Activated CD8-positive, alpha-beta memory T cell treated with anti-CD3 and anti-CD28 coated beads, Interleukin-2, amount 10 ng/mL, durations not matched to agents 7 days and 5 days (primary cell): ENCODE measurements at regions of chr1 and their contacts with region 1.

Region 1: DNA sequence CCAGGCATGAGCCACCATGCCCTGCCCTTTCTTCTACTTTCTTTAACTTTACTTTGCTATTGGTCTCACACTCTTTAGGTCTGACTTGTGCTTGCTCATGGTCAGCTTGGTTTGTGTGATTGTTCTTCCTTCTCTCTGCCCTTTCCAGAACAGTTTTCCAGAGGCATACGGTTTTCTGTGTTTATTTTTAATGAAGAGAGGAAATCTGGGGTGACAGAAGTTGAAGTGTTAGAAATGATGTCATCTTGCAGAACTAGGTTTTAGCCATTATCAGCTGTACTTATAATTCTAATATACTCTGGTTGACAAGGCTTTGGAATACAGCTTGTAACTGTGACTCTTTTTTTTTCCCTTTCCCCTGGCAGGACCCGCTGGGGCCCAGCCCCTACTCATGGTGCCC is 14.4 kb downstream of the AGO3 start:
- DNase-seq: no peak
- ATAC-seq: no peak
- H3K4me3 Mint-ChIP-seq: no peak overlapping the region
- H3K27ac Mint-ChIP-seq: peak overlapping the region; percentile 41
- H3K4me1 Mint-ChIP-seq: peaks cover 50% of the 10 kb centered on the region
- H3K27me3 Mint-ChIP-seq: no peaks in the 10 kb centered on the region

Region 2: GRCh38 chr1:35930593-35931445 is 14.5 kb before region 1 on chr1 and contains the start of gene AGO3:
- CTCF ChIA-PET with region 1: interaction called, 39 read pairs
- DNase-seq: peak; percentile 91
- ATAC-seq: peak; percentile 87
- H3K4me3 Mint-ChIP-seq: peak within 1 kb of the TSS; percentile 95
- H3K27ac Mint-ChIP-seq: peak within 1 kb of the TSS; percentile 95
- H3K4me1 Mint-ChIP-seq: peaks cover 31% of the 10 kb centered on the region
- H3K27me3 Mint-ChIP-seq: no peaks in the 10 kb centered on the region
- total RNA-seq, gene AGO3: 26.2 to 33.1 TPM

Region 3: GRCh38 chr1:35962952-35963351 is 17.6 kb after region 1 on chr1:
- CTCF ChIA-PET with region 1: no interaction called
- DNase-seq: no peak
- ATAC-seq: no peak
- H3K4me3 Mint-ChIP-seq: no peak overlapping the region
- H3K27ac Mint-ChIP-seq: no peak overlapping the region
- H3K4me1 Mint-ChIP-seq: no peaks in the 10 kb centered on the region
- H3K27me3 Mint-ChIP-seq: no peaks in the 10 kb centered on the region

Region 4: DNA sequence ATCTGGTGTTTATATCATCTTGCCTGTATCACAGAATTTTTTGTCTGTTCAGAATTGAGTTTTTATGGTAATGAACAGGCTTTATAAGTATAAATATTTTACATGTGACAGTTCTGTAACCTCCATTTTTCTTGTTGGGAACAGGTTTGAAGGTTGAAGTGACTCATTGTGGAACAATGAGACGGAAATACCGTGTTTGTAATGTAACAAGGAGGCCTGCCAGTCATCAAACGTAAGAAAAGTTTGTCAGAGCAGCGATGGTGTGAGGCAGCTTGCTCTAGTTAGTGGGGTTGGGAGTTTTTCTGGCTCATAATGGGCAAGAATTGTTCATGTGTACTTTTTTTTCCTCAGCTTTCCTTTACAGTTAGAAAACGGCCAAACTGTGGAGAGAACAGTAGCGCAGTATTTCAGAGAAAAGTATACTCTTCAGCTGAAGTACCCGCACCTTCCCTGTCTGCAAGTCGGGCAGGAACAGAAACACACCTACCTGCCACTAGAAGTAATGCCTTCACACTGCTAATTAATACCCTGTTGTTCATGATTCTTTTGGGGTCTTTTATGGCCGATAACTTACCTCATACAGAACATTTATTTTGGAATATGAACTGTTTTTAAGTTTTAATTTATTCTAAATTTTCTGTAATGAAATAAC is 63.3 kb after region 1 on chr1:
- CTCF ChIA-PET with region 1: no interaction called
- DNase-seq: no peak
- ATAC-seq: peak; percentile 64
- H3K4me3 Mint-ChIP-seq: no peak overlapping the region
- H3K27ac Mint-ChIP-seq: no peak overlapping the region
- H3K4me1 Mint-ChIP-seq: peaks cover 2% of the 10 kb centered on the region
- H3K27me3 Mint-ChIP-seq: no peaks in the 10 kb centered on the region

Region 5: GRCh38 chr1:36055706-36056105 is 110.4 kb after region 1 on chr1:
- CTCF ChIA-PET with region 1: no interaction called
- DNase-seq: no peak
- ATAC-seq: no peak
- H3K4me3 Mint-ChIP-seq: no peak overlapping the region
- H3K27ac Mint-ChIP-seq: no peak overlapping the region
- H3K4me1 Mint-ChIP-seq: no peaks in the 10 kb centered on the region
- H3K27me3 Mint-ChIP-seq: no peaks in the 10 kb centered on the region